Brain microvascular endothelial cell (primary cell): ENCODE measurements at regions of chr4 and their contacts with region 1.

Region 1: DNA sequence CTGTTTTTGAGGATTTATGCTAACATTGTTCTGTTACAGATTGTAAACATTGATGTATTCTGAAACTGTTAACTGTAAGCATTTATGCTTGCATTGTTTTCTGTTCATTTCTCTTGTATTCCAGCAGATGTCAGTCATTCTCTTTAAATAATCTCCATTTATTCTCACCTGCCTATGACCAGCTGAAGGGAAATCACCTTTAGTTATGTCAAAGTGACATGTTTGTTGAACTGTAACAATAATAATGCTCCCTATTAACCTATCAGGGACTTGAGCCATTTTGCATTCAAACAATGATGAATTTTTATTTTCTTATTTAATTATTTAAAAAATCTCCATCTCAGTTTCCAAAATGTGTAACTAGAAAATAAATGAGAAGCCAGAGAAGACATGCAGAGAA is 58.0 kb downstream of the SPCS3 start:
- DNase-seq: no peak
- H3K4me3 ChIP-seq: no peak overlapping the region
- H3K27ac ChIP-seq: no peak overlapping the region
- H3K27me3 ChIP-seq: no peaks in the 10 kb centered on the region
- CTCF ChIP-seq: peak; percentile 21

Region 2: DNA sequence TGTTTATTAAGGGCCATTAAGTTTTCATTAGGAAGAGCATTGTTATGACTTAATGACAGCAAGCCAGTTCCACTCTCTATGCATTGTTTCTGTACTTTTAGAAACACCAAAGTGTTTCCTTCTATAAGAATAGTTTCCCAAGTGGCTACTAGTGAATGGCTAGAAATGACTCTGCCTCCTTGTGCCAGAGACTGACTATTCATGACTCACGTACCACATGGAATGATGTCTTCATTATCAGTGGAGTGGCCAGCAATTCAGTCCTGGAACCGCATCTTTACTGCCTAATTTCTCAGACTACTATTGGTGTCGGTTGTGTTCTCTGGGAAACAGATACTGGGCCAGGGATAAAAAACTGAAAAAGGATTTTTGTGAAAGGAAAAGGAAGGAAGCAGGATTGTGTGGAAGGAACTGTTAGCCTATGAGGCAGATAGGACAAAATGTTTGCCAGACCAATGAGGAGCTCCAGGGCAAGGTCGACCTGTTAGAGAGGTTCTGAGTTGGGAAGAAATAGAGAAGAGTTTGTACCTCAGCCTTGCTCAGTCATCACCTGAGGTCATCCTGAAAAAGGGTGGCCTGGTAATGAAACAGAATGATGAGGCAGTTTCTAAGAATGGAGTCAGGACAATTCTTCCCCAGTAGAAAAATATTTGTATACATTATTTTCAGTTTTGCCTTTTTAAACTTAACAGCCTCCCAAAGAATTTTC is 160.6 kb after region 1 on chr4:
- in situ Hi-C with region 1: loop called (anchors 25 kb)
- DNase-seq: peak; percentile 96
- H3K4me3 ChIP-seq: no peak overlapping the region
- H3K27ac ChIP-seq: peak overlapping the region; percentile 94
- H3K27me3 ChIP-seq: no peaks in the 10 kb centered on the region
- CTCF ChIP-seq: no peak

Region 3: DNA sequence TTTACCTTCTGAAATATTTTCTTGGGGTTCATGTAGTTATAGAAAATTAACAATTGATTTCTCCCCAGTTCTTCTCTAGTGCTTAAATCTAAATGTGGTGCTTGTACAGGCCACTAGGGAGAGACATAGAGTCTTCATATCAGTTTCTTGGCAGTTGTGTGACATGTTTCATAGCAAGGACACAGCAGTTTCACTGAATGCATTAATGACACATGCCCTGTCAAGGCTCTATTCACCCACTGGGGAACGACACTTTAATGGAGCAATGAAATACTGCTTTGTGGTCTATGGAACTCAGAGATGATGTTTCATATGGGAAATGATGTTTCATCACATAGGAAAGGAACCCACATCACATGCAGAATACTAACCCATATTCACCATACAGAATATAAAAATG is 412.2 kb after region 1 on chr4:
- in situ Hi-C with region 1: loop called (anchors 25 kb)
- DNase-seq: peak; percentile 76
- H3K4me3 ChIP-seq: peak overlapping the region; percentile 90
- H3K27ac ChIP-seq: peak overlapping the region; percentile 93
- H3K27me3 ChIP-seq: no peaks in the 10 kb centered on the region
- CTCF ChIP-seq: peak; percentile 62

Region 4: DNA sequence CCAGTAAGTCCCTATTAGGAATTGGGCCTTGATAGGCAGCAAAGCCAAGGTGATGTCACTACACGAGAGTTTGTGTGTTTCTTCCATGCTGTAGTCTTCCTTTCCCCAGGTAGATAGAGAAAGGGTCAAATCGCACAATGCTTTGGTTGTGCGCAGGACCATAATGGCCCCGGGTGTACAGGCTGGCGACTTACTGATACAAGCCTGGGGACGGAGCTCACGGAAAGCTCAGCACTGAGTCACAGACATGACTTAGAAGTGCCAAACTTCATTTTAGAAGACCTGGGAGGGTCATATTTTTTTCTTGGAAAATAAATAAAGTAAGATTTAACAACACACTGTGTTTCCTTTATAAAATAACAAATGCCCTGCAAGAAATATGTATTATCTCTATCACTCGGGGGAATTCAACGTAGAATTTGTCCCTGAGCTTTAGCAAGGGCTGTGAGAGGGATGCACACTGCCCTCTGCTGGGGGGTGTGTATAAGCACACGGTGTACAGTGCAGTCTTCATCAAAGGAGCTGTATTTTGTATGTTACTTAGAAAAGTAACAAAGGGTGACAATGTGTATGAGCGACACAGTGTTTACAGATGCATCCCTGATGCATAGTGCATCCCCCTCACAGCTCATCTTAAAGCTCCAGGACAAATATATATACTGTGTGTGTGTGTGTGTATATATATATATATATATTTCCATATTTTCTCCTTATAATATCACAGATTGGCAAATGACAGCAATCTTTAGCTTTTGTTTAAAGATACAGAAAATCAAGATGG is 669.5 kb after region 1 on chr4:
- in situ Hi-C with region 1: loop called (anchors 25 kb)
- DNase-seq: peak; percentile 52
- H3K4me3 ChIP-seq: no peak overlapping the region
- H3K27ac ChIP-seq: no peak overlapping the region
- H3K27me3 ChIP-seq: no peaks in the 10 kb centered on the region
- CTCF ChIP-seq: peak; percentile 85